BJ (cell line): ENCODE measurements at regions of chr22 and their contacts with region 1.

Region 1: GRCh38 chr22:32985899-32986765 is 72.0 kb downstream of the SYN3 start:
- DNase-seq: no peak
- H3K4me3 ChIP-seq: no peak overlapping the region
- H3K27me3 ChIP-seq: 0 out of 2 replicates have a peak, but pooled peaks cover 3% of the 10 kb centered on the region
- CTCF ChIP-seq: peak; percentile 85

Region 2: DNA sequence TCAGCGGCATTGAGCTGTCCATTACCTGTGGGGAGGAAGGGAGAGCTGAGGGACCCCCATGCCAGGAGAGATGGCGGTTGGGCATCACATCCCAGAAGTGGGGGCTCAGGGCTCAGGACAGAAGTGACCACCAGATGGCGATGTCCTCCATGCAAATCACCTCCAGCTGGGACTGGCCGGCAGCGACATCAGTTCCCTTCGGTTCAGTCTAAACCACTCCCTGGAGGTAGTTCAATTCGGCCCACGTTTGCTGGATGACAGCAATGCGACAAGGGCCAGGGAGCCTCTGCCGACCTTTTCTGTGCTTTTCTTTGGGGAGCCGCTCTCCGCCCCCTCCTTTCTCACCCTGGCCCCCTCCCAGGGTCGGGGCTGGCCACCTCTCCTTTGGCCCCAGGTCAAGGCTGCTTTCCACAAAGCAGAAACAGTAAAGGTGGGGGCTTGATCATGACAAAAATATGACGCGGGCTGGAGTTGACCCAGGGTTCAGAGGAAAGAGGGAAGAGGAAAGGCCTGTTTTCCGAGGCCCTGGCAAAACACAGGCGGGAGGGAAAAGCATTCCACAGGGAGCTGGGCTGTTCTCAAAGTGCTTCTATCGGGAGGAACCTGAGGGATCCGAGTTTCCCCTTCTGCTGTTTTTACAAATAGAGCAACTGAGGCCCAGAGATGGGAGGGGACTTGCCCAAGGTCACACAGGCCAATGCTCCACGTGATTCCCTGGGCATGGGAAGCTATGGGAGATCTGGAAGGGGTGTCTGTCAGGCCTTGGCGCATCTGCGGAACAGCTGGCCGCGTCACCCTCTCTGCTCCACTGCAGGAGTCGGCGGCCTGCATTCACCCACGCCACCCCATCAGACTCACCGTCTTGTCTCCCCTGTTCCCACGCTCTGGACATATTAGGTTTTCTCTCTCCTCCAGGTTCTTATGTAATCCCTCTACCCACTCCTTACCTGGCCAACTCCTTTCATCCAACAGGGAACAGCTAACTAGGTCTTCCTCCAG is 456.8 kb before region 1 on chr22:
- CTCF ChIA-PET with region 1: interaction called, 69 read pairs
- POLR2A ChIA-PET with region 1: no interaction called
- DNase-seq: no peak
- H3K4me3 ChIP-seq: no peak overlapping the region
- H3K27me3 ChIP-seq: no peaks in the 10 kb centered on the region
- CTCF ChIP-seq: peak; percentile 84

Region 3: DNA sequence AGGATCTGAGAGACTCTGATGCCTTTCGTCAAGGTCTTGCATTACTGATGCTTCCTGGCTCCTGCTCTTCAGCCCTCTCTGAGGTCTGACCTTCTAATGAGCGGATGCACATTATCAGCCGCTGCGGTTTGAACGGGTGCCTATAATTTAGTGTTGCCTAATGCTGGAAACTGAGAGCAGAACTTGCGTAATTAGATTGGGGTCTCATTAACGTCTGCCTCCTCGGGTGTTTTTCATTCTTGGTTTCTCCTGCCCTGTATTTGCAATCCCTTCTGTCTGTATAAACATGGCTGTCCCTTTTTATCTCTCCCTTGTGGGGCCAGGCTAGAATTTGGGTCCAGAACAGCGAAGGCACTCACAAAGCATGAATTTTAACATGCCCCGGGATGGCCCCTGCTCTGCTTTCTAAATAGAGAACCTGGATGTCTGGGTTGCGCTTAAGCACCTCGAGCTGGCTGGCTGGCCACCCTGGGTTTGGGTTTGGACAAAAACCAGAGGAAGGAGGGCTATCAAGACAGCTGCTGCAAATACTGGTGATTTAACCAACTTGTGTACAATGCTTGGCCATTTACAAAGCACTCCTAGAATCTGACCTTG is 66.0 kb before region 1 on chr22:
- CTCF ChIA-PET with region 1: interaction called, 14 read pairs
- POLR2A ChIA-PET with region 1: no interaction called
- DNase-seq: no peak
- H3K4me3 ChIP-seq: no peak overlapping the region
- H3K27me3 ChIP-seq: peaks cover 11% of the 10 kb centered on the region
- CTCF ChIP-seq: no peak

Region 4: GRCh38 chr22:32967386-32968101 is 18.6 kb before region 1 on chr22:
- CTCF ChIA-PET with region 1: interaction called, 15 read pairs
- POLR2A ChIA-PET with region 1: no interaction called
- DNase-seq: no peak
- H3K4me3 ChIP-seq: no peak overlapping the region
- H3K27me3 ChIP-seq: peaks cover 6% of the 10 kb centered on the region
- CTCF ChIP-seq: no peak

Region 5: DNA sequence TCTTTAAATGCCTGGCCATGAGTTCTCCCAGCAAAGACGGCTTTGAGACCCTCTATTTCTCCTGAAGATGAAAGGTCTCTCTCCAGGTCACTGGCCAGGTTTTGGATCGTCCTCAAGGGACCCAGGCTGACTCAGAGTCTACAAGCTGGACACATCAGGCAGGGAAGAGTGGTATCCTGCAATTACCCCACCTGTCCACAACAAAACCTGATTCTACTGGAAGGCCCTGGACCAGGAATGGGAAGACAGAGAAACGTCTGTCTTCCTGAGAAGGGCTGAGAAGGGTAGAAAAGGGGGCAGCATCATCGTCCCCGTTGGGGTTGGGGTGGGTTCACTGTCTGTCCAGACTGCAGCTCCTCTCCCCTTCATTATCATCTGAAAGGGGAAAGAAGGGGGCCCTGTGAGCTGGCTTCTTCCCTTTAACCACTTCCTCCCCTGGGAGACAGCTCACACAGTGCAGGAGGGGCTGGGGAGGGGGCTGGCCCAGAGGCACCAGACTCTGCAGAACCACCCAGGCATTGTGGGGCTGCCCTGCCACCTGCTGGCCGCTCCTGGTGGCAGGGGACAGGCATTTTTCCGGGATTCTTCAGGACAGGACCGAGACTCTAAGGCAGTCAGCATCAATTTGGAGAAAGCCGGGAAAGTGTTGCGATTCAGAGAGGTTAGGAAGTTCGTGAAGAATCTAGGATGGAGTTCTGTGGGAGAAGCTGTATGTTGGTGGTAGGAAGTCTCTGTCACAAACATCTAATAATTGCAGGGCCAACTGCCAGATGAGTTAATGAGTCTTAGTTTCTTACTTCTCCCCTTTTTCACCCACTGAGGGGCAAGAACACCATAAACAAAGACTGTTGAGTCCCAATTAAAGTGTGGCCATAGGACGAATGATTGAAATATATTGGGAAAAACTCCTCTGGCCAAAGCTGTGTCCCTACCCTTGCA is 14.5 kb after region 1 on chr22:
- CTCF ChIA-PET with region 1: interaction called, 18 read pairs
- POLR2A ChIA-PET with region 1: no interaction called
- DNase-seq: no peak
- H3K4me3 ChIP-seq: no peak overlapping the region
- H3K27me3 ChIP-seq: no peaks in the 10 kb centered on the region
- CTCF ChIP-seq: peak; percentile 95

Region 6: DNA sequence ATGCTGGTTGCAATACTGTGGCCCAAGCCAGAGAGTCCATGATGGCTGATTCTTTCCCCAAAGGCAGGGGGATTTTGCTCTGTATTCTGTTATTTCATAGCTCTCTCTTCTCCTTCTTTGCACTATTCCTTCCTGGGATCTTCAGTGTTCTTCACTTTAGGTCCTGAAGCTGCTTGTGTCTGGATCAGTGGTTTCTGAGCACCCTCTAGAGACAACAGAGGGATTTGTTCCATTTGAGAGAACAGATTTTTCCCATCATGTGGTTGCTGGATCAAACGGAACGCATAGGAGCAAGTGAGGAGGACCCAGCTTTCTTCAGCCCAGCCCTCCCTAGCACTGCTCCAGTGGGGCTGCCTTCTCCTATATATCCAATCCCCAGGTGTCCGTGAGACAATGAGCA is 140.7 kb after region 1 on chr22:
- CTCF ChIA-PET with region 1: no interaction called
- POLR2A ChIA-PET with region 1: no interaction called
- DNase-seq: no peak
- H3K4me3 ChIP-seq: no peak overlapping the region
- H3K27me3 ChIP-seq: no peaks in the 10 kb centered on the region
- CTCF ChIP-seq: no peak

Region 7: DNA sequence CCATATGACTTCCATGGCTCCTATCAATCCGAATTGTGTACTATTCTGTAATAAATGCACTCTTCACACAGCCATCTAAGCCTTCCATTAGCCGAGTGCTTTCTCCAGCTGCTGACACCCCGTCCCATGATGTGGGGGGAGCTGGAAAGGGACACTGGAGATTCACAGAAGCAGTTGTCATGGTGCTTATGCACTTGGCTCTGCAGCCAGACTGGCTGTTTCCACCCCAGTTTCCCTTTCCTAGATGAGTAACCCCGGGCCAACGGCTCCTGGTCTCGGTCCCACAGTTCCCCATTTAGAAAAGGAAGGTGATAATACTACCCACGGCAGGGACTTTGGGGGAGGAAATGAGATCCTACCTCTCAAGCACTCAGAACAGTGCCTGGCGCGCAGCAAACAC is 317.0 kb after region 1 on chr22:
- CTCF ChIA-PET with region 1: no interaction called
- POLR2A ChIA-PET with region 1: no interaction called
- DNase-seq: no peak
- H3K4me3 ChIP-seq: no peak overlapping the region
- H3K27me3 ChIP-seq: no peaks in the 10 kb centered on the region
- CTCF ChIP-seq: no peak